ENCODE measurements at regions of chr10 and their contacts with region 1.

Region 1: DNA sequence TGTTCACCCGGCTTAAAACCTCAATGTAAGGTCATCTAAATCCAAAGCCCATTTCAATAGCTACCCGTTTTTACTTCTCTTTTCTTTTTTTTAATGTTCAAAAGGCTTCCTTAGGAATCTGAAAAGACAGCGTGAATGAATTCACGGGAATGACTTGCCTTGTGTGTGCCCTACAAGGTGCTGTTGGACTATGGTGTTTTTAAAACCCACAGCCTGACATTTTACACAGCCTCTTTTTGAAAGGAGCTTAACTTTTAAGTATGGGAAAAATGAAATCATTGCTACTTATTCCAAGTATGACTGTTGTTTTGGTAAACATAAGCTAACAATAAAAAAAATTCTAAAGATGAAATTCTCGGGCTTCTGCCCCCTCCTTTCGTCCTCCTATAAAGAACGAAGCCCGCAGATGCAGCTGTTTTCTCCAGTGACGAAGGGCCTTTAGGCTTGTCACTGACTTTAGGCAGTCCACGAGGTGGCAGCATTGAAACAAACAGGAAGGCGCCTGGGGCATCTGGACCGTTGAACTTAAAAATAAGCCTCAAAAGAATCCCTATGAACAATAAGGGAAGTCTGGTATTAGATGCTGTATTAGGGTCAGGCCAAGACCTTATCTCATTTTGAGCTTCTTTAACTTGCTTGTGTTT is 141.3 kb downstream of the NRP1 start:
- DNase-seq: peak; percentile 85
- H3K4me3 ChIP-seq: no peak overlapping the region
- H3K4me3 Mint-ChIP-seq: no peak overlapping the region
- H3K27ac Mint-ChIP-seq: no peak overlapping the region
- H3K4me1 ChIP-seq: peaks cover 44% of the 10 kb centered on the region
- H3K4me1 Mint-ChIP-seq: peaks cover 39% of the 10 kb centered on the region
- H3K27me3 ChIP-seq: no peaks in the 10 kb centered on the region
- H3K27me3 Mint-ChIP-seq: no peaks in the 10 kb centered on the region
- CTCF ChIP-seq: peak; percentile 89 to 97

Region 2: DNA sequence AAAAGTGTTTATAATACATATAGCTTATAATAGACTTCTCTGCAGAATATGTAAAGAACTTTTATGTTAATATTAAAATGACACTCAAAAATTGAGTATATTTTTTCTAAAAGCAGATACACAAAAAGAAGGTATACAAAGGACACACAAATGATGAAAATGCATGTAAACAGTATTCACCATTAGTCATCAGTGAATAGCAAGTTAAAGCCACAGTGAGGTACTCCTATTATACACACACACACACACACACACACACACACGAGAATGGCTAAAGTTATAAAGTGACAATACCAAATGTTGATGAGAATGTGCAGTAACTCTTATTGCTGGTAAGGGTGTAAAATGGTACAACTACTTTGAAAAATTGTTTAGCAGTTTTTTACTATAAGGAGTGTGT is 328.0 kb before region 1 on chr10:
- CTCF ChIA-PET with region 1: no interaction called
- POLR2A ChIA-PET with region 1: no interaction called
- intact Hi-C with region 1: no loop called
- DNase-seq: no peak
- H3K4me3 ChIP-seq: no peak overlapping the region
- H3K4me3 Mint-ChIP-seq: no peak overlapping the region
- H3K27ac Mint-ChIP-seq: no peak overlapping the region
- H3K4me1 ChIP-seq: no peaks in the 10 kb centered on the region
- H3K4me1 Mint-ChIP-seq: no peaks in the 10 kb centered on the region
- H3K27me3 ChIP-seq: no peaks in the 10 kb centered on the region
- H3K27me3 Mint-ChIP-seq: peaks cover 9% of the 10 kb centered on the region
- CTCF ChIP-seq: no peak

Region 3: GRCh38 chr10:33155720-33156638 is 37.2 kb before region 1 on chr10:
- CTCF ChIA-PET with region 1: no interaction called
- POLR2A ChIA-PET with region 1: no interaction called
- intact Hi-C with region 1: no loop called
- DNase-seq: peak; percentile 81 to 88
- H3K4me3 ChIP-seq: no peak overlapping the region
- H3K4me3 Mint-ChIP-seq: peak overlapping the region; percentile 28
- H3K27ac Mint-ChIP-seq: peak overlapping the region; percentile 8
- H3K4me1 ChIP-seq: peaks cover 36% of the 10 kb centered on the region
- H3K4me1 Mint-ChIP-seq: peaks cover 11% of the 10 kb centered on the region
- H3K27me3 ChIP-seq: no peaks in the 10 kb centered on the region
- H3K27me3 Mint-ChIP-seq: no peaks in the 10 kb centered on the region
- CTCF ChIP-seq: peak; percentile 72 to 92

Region 4: DNA sequence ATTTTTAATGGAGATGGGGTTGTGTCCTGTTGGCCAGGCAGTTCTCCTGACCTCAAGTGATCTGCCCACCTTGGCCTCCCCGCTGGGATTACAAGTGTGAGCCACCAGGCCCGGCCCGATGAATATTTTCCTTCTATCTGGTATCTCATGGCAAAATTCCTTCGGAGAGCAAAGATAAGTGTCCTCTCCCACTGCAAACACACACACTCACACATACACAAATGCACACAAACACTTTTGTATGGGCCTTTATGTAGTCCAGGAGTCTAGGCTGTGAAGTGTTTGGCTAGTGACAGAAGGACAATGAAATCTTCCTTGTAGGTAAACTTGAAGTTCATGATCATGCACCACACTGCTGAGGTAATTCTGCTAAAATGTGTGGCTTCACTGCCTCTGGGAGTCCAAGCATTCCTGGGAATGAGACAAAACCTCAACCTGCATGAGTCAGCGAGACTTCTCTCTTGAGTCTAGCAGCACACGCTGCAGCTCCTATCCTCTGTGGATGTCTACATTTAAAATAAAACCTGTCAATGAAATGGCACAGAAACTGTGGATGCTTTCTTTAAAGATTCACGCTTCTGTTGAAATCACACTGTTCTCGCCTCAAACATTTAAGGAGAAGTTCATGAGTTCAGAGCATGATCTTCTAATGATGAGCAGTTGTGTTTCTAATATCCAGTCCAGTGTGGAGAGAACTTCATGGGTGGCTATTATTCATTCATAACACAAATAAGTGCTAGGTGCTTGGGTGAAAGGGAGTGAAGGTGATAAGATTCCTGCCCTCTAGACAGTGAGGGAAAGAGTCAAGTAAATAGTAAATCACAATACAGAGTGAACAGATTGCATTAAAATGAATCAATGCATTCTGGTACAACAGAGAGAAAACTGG is 44.8 kb after region 1 on chr10:
- CTCF ChIA-PET with region 1: no interaction called
- POLR2A ChIA-PET with region 1: no interaction called
- intact Hi-C with region 1: loop called (anchors 1 kb)
- DNase-seq: peak; percentile 61 to 70
- H3K4me3 ChIP-seq: no peak overlapping the region
- H3K4me3 Mint-ChIP-seq: peak overlapping the region; percentile 14
- H3K27ac Mint-ChIP-seq: peak overlapping the region; percentile 88
- H3K4me1 ChIP-seq: peaks cover 87% of the 10 kb centered on the region
- H3K4me1 Mint-ChIP-seq: peaks cover 47% of the 10 kb centered on the region
- H3K27me3 ChIP-seq: no peaks in the 10 kb centered on the region
- H3K27me3 Mint-ChIP-seq: no peaks in the 10 kb centered on the region
- CTCF ChIP-seq: no peak

Region 5: DNA sequence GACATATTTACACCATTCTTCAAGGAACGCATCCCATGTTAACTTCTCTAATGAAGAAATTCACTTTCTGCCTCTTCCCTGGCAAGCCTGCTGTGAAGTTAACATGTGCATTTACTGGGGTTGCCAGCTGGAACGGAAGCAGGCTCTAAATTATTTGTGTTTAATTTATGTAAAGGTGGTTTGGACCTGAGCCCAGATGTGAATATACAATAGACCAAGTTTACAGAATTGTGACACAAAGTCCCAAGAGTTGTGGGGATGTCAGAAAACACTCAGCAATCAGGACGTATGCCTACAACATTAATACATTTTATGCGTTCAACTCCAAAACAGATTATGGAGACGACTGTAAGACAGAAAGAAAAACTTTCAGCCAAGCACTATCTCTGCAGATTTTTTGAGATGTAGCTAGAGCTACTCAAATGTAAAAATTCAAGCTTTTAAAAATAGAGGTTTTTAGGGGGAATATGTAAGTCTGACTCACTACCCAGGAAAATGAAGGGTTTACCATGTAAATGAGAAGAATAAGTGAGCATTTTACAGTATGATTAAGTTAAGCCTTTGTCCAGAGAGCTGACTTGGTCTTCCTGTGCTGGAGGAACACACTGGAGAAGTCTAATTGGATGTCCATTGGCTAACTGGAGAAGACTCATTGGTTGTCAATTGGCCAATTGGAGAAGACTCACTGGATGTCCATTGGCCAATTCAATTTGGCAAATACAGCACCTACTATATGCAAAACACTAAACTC is 121.8 kb after region 1 on chr10:
- CTCF ChIA-PET with region 1: interaction called, 7 read pairs
- POLR2A ChIA-PET with region 1: no interaction called
- intact Hi-C with region 1: loop called (anchors 5 kb)
- DNase-seq: no peak
- H3K4me3 ChIP-seq: no peak overlapping the region
- H3K4me3 Mint-ChIP-seq: no peak overlapping the region
- H3K27ac Mint-ChIP-seq: peak overlapping the region; percentile 74
- H3K4me1 ChIP-seq: peaks cover 34% of the 10 kb centered on the region
- H3K4me1 Mint-ChIP-seq: peaks cover 26% of the 10 kb centered on the region
- H3K27me3 ChIP-seq: no peaks in the 10 kb centered on the region
- H3K27me3 Mint-ChIP-seq: no peaks in the 10 kb centered on the region
- CTCF ChIP-seq: no peak

Region 6: GRCh38 chr10:33801748-33802147 is 608.6 kb after region 1 on chr10:
- CTCF ChIA-PET with region 1: no interaction called
- POLR2A ChIA-PET with region 1: no interaction called
- intact Hi-C with region 1: loop called (anchors 10 kb)
- DNase-seq: peak; percentile 81 to 88
- H3K4me3 ChIP-seq: no peak overlapping the region
- H3K4me3 Mint-ChIP-seq: peak overlapping the region; percentile 39
- H3K27ac Mint-ChIP-seq: peak overlapping the region; percentile 90
- H3K4me1 ChIP-seq: peaks cover 69% of the 10 kb centered on the region
- H3K4me1 Mint-ChIP-seq: peaks cover 50% of the 10 kb centered on the region
- H3K27me3 ChIP-seq: no peaks in the 10 kb centered on the region
- H3K27me3 Mint-ChIP-seq: no peaks in the 10 kb centered on the region
- CTCF ChIP-seq: no peak

Region 7: GRCh38 chr10:34637418-34637911 is 1444.3 kb after region 1 on chr10:
- CTCF ChIA-PET with region 1: no interaction called
- POLR2A ChIA-PET with region 1: no interaction called
- intact Hi-C with region 1: loop called (anchors 2 kb)
- DNase-seq: peak; percentile 63 to 88
- H3K4me3 ChIP-seq: no peak overlapping the region
- H3K4me3 Mint-ChIP-seq: no peak overlapping the region
- H3K27ac Mint-ChIP-seq: no peak overlapping the region
- H3K4me1 ChIP-seq: no peaks in the 10 kb centered on the region
- H3K4me1 Mint-ChIP-seq: peaks cover 13% of the 10 kb centered on the region
- H3K27me3 ChIP-seq: no peaks in the 10 kb centered on the region
- H3K27me3 Mint-ChIP-seq: no peaks in the 10 kb centered on the region
- CTCF ChIP-seq: peak; percentile 98 to 99

Measured in Caco-2 (cell line).